Mammary epithelial cell (primary cell): ENCODE measurements at regions of chr14 and their contacts with region 1.

Region 1: GRCh38 chr14:101809671-101810514 is 48.4 kb downstream of the PPP2R5C start:
- DNase-seq: peak; percentile 92
- H3K4me3 ChIP-seq: peak overlapping the region; percentile 68 to 78 (median 74)
- H3K27ac ChIP-seq: peak overlapping the region; percentile 98
- H3K4me1 ChIP-seq: peaks cover 4% of the 10 kb centered on the region
- H3K27me3 ChIP-seq: no peaks in the 10 kb centered on the region
- CTCF ChIP-seq: no peak

Region 2: DNA sequence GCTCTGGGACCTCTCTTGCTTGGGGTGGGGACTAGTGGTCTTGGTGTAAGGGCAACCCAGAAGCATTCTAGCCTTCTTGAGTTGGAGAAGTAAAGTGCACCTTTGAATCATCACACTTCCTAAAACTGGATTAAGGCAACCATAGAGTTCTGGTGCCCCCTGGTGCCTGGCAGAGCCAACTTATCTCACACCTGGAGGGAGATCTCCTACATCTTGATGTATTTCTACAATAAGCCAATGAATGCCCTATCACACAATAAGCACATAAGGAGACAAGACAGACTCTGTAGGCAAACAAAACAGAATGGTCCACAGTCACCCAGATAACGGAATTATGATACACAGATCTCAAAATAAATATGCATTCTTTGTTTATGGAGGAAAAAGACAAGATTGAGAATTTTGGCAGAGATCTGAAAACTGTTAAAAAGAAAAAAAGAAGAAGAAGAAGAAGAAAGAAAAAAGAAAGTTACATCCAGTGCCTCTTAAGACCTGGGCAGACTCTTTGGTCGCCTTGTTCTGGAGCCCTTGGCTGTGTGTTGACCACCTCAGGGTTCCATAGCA is 144.3 kb before region 1 on chr14:
- CTCF ChIA-PET with region 1: no interaction called
- dilution Hi-C with region 1: no loop called
- in situ Hi-C with region 1: no loop called
- intact Hi-C with region 1: no loop called
- DNase-seq: peak; percentile 52
- H3K4me3 ChIP-seq: no peak overlapping the region
- H3K27ac ChIP-seq: no peak overlapping the region
- H3K4me1 ChIP-seq: no peaks in the 10 kb centered on the region
- H3K27me3 ChIP-seq: no peaks in the 10 kb centered on the region
- CTCF ChIP-seq: peak; percentile 70 to 84

Region 3: DNA sequence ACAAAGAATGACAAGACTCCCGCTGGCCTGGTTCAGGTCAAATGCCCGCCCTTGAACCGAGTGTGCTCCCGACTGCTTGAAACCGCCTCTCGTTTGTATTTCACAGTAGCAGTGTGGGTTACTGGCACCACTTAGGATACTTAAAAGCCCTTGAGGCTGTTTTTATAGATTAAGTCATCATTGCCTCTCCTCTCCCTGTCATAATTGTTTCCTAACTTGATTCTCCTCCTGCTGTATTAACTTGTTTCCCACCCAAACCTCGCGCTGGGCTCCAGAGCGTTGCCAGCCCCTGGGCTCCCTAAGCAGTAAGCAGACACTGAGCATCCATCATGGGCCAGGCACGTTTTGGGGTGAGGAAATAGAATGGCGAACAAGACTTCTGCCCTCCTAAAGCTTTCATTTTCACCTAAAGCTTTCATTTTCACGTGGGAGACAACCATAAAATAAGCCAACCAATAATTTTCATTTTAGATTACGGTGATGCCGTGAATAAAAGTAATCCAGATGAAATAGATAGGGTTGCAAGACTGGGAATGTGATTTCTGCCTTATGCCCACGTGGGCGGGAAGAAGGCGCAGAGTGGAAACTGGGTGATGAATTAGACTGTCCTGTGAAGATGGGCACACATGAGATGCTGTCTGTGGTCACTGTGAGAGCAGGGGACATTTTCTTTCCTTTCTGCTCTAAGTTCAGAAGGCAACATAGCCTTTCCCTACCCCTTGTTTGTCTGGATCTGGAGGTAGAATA is 49.1 kb after region 1 on chr14:
- CTCF ChIA-PET with region 1: no interaction called
- dilution Hi-C with region 1: loop called (anchors 5 kb)
- in situ Hi-C with region 1: no loop called
- intact Hi-C with region 1: no loop called
- DNase-seq: no peak
- H3K4me3 ChIP-seq: no peak overlapping the region
- H3K27ac ChIP-seq: no peak overlapping the region
- H3K4me1 ChIP-seq: no peaks in the 10 kb centered on the region
- H3K27me3 ChIP-seq: no peaks in the 10 kb centered on the region
- CTCF ChIP-seq: no peak